ENCODE measurements at regions of chr10 and their contacts with region 1.

Region 1: GRCh38 chr10:80924063-80924952 is 386.6 kb downstream of the SH2D4B start:
- DNase-seq: peak; percentile 11
- ATAC-seq: no peak
- H3K4me3 ChIP-seq: no peak overlapping the region
- H3K27ac ChIP-seq: no peak overlapping the region
- H3K4me1 ChIP-seq: no peaks in the 10 kb centered on the region
- H3K27me3 ChIP-seq: no peaks in the 10 kb centered on the region
- CTCF ChIP-seq: peak; percentile 50
- POLR2A ChIP-seq: no peak
- RAD21 ChIP-seq: peak; percentile 42

Region 2: GRCh38 chr10:80382989-80383388 is 541.3 kb before region 1 on chr10:
- CTCF ChIA-PET with region 1: no interaction called
- POLR2A ChIA-PET with region 1: no interaction called
- dilution Hi-C with region 1: no loop called
- in situ Hi-C with region 1: no loop called
- intact Hi-C with region 1: loop called (anchors 5 kb)
- DNase-seq: peak; percentile 11
- ATAC-seq: peak; percentile 17; the same call in 1 of the 2 replicates
- H3K4me3 ChIP-seq: no peak overlapping the region
- H3K27ac ChIP-seq: no peak overlapping the region
- H3K4me1 ChIP-seq: no peaks in the 10 kb centered on the region
- H3K27me3 ChIP-seq: 0 out of 2 replicates have a peak, but pooled peaks cover 2% of the 10 kb centered on the region
- CTCF ChIP-seq: peak; percentile 50
- POLR2A ChIP-seq: no peak
- RAD21 ChIP-seq: peak; percentile 49

Region 3: DNA sequence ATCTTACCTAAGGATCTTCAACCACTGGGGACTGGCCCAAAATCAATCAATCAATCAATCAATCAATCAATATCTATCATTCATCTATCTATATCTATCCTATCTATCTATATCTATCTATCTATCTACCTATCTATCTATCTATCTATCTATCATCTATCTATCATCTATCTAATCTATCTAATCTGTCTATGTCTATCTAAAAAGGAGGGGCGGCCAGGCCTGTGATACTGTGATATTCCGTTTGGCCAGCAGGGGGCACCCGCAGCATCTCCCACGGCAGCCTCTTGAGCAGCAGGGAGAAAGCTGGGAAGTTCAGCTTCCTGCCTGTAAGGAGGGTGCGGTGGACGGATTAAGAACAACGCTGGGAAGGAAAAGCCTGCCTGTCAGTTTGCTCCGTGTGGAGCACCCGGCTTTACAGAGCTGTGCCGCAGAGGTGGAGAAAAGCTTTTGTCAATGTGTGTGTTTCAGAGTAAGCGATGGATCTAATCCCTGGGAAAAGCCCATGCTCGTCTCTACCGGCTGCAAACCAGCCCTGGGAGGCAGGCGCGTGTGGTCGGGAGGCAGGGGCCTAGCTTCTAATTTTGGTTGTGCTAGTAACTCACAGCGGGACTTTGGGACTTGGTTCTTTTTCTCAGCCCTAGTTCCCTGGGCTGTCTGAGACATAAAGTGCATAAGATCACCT is 261.6 kb before region 1 on chr10:
- CTCF ChIA-PET with region 1: no interaction called
- POLR2A ChIA-PET with region 1: no interaction called
- dilution Hi-C with region 1: no loop called
- in situ Hi-C with region 1: no loop called
- intact Hi-C with region 1: loop called (anchors 1 kb)
- DNase-seq: peak; percentile 71
- ATAC-seq: peak; percentile 99
- H3K4me3 ChIP-seq: no peak overlapping the region; the same call in 1 of the 2 replicates
- H3K27ac ChIP-seq: no peak overlapping the region
- H3K4me1 ChIP-seq: no peaks in the 10 kb centered on the region
- H3K27me3 ChIP-seq: no peaks in the 10 kb centered on the region
- CTCF ChIP-seq: peak; percentile 77
- POLR2A ChIP-seq: no peak
- RAD21 ChIP-seq: peak; percentile 53

Region 4: GRCh38 chr10:80699602-80700039 is 224.7 kb before region 1 on chr10:
- CTCF ChIA-PET with region 1: no interaction called
- POLR2A ChIA-PET with region 1: no interaction called
- dilution Hi-C with region 1: no loop called
- in situ Hi-C with region 1: no loop called
- intact Hi-C with region 1: loop called (anchors 1 kb)
- DNase-seq: peak; percentile 50
- ATAC-seq: peak; percentile 98
- H3K4me3 ChIP-seq: no peak overlapping the region
- H3K27ac ChIP-seq: no peak overlapping the region
- H3K4me1 ChIP-seq: no peaks in the 10 kb centered on the region
- H3K27me3 ChIP-seq: no peaks in the 10 kb centered on the region
- CTCF ChIP-seq: peak; percentile 71
- POLR2A ChIP-seq: no peak
- RAD21 ChIP-seq: peak; percentile 62

Region 5: DNA sequence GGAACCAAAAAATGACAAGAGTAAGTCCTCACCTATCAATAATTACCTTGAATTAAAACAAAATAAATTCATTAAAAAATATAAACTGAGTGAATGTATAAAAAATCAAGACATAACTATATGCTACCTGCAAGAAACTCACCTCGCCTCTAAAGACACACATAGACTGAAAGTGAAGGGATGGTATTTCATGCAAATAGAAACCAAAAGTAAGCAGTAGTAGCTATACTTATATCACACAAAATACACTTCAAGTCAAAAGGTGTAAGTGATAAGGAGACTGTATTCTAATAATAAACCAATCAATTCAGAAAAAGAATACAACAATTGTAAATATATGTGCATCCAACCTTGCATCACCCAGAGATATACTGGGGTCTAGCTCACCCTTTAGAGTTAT is 54.0 kb before region 1 on chr10:
- CTCF ChIA-PET with region 1: no interaction called
- POLR2A ChIA-PET with region 1: no interaction called
- dilution Hi-C with region 1: no loop called
- in situ Hi-C with region 1: no loop called
- intact Hi-C with region 1: no loop called
- DNase-seq: no peak
- ATAC-seq: no peak
- H3K4me3 ChIP-seq: no peak overlapping the region
- H3K27ac ChIP-seq: no peak overlapping the region
- H3K4me1 ChIP-seq: no peaks in the 10 kb centered on the region
- H3K27me3 ChIP-seq: no peaks in the 10 kb centered on the region
- CTCF ChIP-seq: no peak
- POLR2A ChIP-seq: no peak
- RAD21 ChIP-seq: no peak

Measured in IMR-90 (cell line).